Esophagus squamous epithelium (tissue), 5 donors: ENCODE measurements at regions of chr11 and their contacts with region 1.

Region 1: GRCh38 chr11:102733232-102733875 is 8.6 kb upstream of the MMP8 start:
- DNase-seq: no peak
- H3K4me3 ChIP-seq: no peak overlapping the region
- H3K27ac ChIP-seq: no peak overlapping the region
- H3K4me1 ChIP-seq: no peaks in the 10 kb centered on the region
- H3K27me3 ChIP-seq: no peaks in the 10 kb centered on the region
- CTCF ChIP-seq: peak in 5 of 6 experiments; percentile 57 to 88 (median 68)
- POLR2A ChIP-seq: no peak

Region 2: DNA sequence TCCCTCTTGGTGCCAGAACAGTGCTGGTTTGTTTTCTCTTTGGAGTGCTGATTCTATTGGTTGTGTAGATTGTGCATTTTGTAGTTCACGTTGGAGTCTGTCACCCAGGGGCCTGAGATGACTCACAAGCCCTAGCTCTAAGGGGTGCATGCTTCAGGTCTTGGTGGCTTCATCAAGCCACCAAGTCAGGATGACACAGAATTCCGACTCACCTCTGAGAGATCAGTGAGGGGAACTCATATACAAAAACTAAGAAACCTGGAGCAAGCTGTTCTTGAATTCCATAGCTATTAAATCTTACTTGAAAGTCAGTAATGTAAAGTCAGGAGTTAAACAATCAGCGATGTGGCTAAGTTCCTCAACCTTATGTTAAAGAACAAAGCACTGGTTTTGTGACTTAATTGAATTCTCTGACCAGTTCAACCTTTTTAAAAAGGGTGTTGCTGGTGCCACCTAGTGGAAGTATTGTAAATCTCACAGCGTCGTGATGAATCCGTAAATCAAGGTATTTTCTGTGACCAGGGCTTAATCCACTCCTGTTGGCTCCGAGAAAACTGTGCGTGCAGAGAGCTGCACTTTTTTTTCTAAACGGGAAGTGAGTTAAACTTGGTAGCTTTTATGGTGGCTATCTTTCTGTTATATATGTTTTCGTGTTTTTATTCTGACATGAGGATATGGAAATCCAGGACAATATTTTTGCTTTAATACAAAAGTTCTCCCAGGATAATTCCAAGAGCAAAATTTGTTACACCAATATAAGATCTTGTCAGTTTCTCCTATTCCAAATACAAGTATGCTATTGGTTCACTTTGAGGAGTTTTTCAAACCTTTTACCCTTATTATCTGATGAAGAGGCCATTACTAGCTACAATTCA is 207.6 kb after region 1 on chr11:
- intact Hi-C with region 1: loop called (anchors 10 kb)
- DNase-seq: no peak
- H3K4me3 ChIP-seq: no peak overlapping the region
- H3K27ac ChIP-seq: no peak overlapping the region
- H3K4me1 ChIP-seq: peaks cover 0 to 7% (median 0%) of the 10 kb centered on the region in 3 donors
- H3K27me3 ChIP-seq: peaks cover 0 to 19% (median 0%) of the 10 kb centered on the region in 4 donors
- CTCF ChIP-seq: peak; percentile 26 to 86 (median 74)
- POLR2A ChIP-seq: no peak

Region 3: DNA sequence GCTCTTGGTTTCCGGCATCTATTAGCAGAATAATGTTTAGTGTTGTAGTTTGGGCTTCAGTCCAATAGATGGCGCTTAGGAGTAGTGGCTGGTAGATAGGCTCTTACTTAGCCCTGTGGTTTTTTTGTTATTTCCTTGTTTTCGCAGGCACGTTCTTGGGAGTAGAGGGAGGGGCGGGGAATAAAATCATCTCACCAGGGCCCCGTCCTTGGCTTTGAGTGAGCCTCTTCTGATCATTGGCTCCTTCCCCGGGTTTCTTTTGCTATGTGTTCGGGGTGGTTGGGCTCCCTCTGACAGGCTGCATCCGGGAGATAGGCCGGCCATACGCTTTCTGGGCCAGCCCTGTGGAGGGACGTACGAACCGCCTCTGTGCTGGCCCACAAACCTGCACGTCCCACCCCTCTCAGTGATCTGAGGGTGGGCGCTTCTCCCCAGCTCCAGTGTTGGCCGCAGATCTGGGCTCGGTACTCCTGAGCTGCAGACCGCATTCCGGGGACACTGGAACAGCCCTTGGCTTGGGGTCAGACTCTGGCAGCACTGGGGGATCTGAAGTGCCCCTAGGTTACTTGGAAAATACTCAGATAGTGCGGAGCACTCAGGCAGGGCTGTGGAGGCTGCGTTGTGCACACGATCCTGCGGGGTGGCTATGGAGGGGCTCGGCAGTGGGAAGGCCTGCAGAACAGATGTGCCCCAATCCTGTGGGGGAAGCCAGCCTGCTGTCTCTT is 592.9 kb after region 1 on chr11:
- intact Hi-C with region 1: no loop called
- DNase-seq: no peak
- H3K4me3 ChIP-seq: no peak overlapping the region
- H3K27ac ChIP-seq: no peak overlapping the region
- H3K4me1 ChIP-seq: no peaks in the 10 kb centered on the region
- H3K27me3 ChIP-seq: no peaks in the 10 kb centered on the region
- CTCF ChIP-seq: peak in 5 of 6 experiments; percentile 13 to 59 (median 30)
- POLR2A ChIP-seq: no peak